Activated naive CD4-positive, alpha-beta T cell treated with anti-CD3 and anti-CD28 coated beads for 36 hours (primary cell): ENCODE measurements at regions of chr20 and their contacts with region 1.

Region 1: GRCh38 chr20:32336918-32337347 is 21.2 kb upstream of the ASXL1 start:
- DNase-seq: no peak
- H3K4me3 Mint-ChIP-seq: no peak overlapping the region
- H3K27ac Mint-ChIP-seq: no peak overlapping the region
- H3K4me1 Mint-ChIP-seq: peaks cover 29% of the 10 kb centered on the region
- H3K27me3 Mint-ChIP-seq: no peaks in the 10 kb centered on the region

Region 2: GRCh38 chr20:32365564-32365963 is 28.6 kb after region 1 on chr20:
- CTCF ChIA-PET with region 1: no interaction called
- intact Hi-C with region 1: no loop called
- DNase-seq: no peak
- H3K4me3 Mint-ChIP-seq: no peak overlapping the region
- H3K27ac Mint-ChIP-seq: no peak overlapping the region
- H3K4me1 Mint-ChIP-seq: peaks cover 82% of the 10 kb centered on the region
- H3K27me3 Mint-ChIP-seq: no peaks in the 10 kb centered on the region

Region 3: DNA sequence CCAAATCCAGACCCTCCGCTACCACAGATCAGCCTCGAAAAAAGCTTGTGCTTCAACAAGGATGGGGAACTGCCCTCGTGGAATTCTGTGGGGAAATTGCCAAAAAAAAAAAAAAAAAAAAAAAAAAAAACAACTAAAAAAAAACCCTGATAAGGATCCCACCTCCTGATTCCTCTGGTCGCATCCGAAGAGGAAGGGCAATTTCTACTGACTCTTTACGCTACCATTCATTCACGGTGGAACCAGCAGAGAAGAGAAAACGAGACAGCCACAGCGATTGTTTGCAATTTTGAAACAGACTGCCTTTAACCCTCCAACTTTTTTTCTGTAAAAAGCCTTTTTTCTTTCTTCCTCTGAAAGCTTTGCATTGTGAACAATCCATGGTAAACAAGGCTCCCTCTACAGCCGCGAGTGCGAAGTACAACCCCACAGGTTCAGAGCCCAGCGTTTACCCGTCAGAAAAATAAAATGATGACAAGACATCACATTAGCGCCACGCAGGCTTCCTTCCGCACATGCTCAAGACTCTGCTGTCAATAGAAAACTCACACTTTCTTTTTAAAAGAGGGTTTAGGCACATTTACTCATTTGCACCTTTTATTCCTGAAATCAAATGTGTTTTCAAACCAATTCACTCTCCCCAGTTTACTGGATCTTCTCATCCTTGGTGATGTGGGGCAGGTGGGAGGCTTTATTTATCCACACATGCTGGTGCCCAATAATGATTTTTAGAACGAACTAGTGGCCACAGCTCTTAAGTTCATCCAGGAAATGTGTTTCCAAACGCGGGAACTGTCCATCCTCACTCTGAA is 148.2 kb after region 1 on chr20:
- CTCF ChIA-PET with region 1: no interaction called
- intact Hi-C with region 1: loop called (anchors 1 kb)
- DNase-seq: peak; percentile 95
- H3K4me3 Mint-ChIP-seq: peak overlapping the region; percentile 84
- H3K27ac Mint-ChIP-seq: peak overlapping the region; percentile 93
- H3K4me1 Mint-ChIP-seq: peaks cover 39% of the 10 kb centered on the region
- H3K27me3 Mint-ChIP-seq: no peaks in the 10 kb centered on the region